A673 (cell line): ENCODE measurements at regions of chr12 and their contacts with region 1.

Region 1: GRCh38 chr12:120167529-120168095 is 26.9 kb downstream of the GCN1 start:
- DNase-seq: peak; percentile 88
- H3K4me3 ChIP-seq: no peak overlapping the region
- H3K27ac ChIP-seq: no peak overlapping the region
- H3K4me1 ChIP-seq: peaks cover 16% of the 10 kb centered on the region
- H3K27me3 ChIP-seq: no peaks in the 10 kb centered on the region
- CTCF ChIP-seq: no peak

Region 2: DNA sequence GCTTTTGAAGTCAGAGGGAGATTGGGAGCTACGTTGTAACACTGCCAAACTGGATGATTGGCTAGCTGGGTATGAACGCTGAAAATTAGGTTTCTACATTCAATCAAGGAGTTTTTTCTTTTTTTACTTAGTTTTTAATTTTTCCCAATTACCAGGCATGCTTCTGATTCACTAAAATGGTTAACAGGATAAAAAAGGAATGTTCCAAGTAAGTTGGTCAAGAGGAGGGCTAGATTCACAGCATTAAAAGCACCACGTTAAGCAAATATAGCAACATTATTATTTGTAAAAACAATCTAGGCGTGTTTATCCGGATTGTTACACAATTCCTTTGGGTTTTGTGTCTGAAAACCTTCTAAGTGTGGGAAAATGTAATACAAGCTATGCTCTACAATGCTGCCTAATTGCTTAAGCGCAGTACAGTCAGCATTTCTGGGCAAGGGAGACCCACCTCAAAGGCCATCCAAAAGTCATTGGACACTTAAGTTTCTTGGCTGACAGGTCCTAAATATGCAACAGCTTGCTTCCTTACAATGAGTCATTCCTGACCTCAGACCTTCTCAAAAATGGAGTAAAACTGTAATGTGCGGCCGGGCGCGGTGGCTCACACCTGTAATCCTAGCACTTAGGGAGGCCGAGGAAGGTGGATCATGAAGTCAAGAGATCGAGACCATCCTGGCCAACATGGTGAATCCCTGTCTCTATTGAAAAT is 32.1 kb after region 1 on chr12:
- CTCF ChIA-PET with region 1: interaction called, 3 read pairs
- POLR2A ChIA-PET with region 1: interaction called, 14 read pairs
- intact Hi-C with region 1: no loop called
- DNase-seq: no peak
- H3K4me3 ChIP-seq: peak overlapping the region; percentile 97
- H3K27ac ChIP-seq: peak overlapping the region; percentile 95
- H3K4me1 ChIP-seq: peaks cover 22% of the 10 kb centered on the region
- H3K27me3 ChIP-seq: no peaks in the 10 kb centered on the region
- CTCF ChIP-seq: no peak